ENCODE measurements at regions of chr10 and their contacts with region 1.

Region 1: GRCh38 chr10:987870-988666 is at the start of gene GTPBP4:
- DNase-seq: peak; percentile 98
- H3K4me3 ChIP-seq: peak within 1 kb of the TSS; percentile 99
- H3K27ac ChIP-seq: peak within 1 kb of the TSS; percentile 48
- H3K4me1 ChIP-seq: peaks cover 26% of the 10 kb centered on the region
- CTCF ChIP-seq: peak; percentile 77
- total RNA-seq, gene GTPBP4: 61.0 and 82.0 TPM in 2 replicates

Region 2: DNA sequence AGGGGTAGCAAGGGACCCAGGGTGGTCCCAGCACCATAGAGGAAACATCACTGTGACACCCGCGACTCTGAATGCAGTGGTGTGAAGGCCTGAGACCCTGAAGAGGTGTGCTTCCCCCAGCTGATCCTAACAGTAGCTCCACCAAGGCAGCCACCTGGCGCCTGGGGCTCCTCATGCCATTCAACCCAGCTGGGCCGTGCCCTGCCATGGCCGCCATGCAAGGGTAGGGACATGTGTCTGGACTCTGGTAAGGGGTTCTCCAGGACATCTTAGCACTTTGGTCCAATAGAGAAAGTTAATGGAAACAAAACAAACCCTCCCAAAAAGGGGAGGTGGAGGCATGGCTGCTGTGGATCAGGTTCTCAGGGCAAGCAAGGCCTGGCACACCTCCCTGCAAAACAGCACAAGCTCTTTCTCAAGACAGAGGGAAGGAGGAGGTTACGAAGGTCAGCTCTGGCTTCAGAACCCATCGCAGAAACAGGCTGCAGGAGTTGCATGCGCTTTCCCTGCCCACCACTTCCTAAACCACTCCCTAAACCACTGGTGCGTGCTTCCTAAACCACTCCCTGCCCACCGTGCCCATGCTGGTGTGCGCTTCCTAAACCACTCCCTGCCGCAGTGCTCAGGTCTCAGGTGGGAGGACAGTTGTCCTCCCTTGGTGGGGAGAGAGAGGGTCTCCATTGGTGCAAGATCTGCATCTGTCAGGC is 165.3 kb before region 1 on chr10:
- CTCF ChIA-PET with region 1: no interaction called
- POLR2A ChIA-PET with region 1: no interaction called
- intact Hi-C with region 1: loop called (anchors 10 kb)
- DNase-seq: peak; percentile 55
- H3K4me3 ChIP-seq: no peak overlapping the region
- H3K27ac ChIP-seq: peak overlapping the region; percentile 11
- H3K4me1 ChIP-seq: peaks cover 16% of the 10 kb centered on the region
- CTCF ChIP-seq: no peak

Region 3: DNA sequence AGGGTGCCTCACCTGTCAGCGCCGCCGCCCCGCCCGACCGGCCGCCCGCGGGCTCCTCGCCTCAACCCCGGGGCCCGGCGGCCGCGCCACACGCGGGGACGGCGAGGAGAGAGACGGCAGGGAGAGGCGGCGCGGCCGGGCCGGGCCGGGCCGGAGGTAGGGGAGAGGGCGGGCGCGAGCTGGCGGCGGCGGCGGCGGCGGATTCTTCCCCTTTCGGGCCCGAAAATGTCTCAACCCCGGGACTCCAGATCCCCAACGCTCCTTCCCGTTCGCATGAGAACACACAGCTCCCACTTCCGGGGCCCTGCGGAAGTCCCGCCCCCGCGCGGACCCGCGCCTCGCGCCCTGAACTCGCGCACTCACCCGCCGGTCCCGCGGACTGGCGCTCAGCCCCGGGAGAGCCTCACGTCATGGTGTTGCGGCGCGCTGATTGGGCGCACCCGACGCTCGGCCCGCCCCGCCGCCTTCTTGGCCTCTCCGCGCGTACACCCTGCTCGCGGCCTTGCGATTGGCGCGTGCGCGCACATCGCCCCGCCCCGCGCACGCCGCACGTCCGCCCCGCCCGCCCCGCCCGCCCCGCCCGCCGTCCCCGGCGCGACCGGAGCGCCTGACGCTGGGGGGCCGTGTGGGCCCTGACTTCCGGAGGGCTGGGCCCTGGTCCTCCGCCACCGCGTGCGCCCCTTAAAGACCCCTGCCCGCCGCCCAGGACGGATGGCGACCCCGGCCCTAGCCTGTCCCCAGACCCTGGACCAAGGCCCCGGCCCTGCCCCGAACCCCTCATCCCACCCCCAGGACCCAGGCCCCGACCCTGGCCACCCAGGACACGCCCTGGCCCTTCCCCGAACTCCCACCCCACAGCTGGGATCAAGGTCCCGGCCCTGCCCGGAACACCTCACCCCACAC is 56.4 kb before region 1 on chr10 and contains the start of gene LARP4B:
- CTCF ChIA-PET with region 1: no interaction called
- POLR2A ChIA-PET with region 1: interaction called, 4 read pairs
- intact Hi-C with region 1: loop called (anchors 1 kb)
- DNase-seq: peak; percentile 98
- H3K4me3 ChIP-seq: peak within 1 kb of the TSS; percentile 78
- H3K27ac ChIP-seq: peak within 1 kb of the TSS; percentile 75
- H3K4me1 ChIP-seq: peaks cover 47% of the 10 kb centered on the region
- CTCF ChIP-seq: no peak
- total RNA-seq, gene LARP4B: 64.8 and 68.3 TPM in 2 replicates

Region 4: DNA sequence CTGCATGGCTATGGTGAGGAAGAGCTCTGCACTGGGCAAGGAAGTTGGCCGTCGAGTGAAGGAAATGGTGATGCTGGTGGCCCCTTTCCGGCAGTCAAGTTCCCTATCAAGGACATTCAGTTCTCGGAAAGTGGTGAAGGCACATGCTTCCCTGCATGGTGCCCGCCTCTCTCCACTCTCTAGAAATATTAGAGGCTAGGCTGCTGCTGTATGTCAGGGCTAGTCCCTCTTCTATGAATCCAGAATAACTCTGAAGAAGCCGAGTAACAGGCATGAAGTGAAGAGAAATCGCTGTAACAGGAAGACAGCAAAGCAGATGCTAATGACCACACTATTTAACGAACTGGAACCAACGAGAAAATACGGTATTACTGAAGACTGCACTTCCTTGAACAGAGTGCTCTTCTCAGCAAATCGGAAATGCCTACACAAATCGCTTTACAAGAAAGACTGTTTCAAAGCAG is 55.5 kb after region 1 on chr10:
- CTCF ChIA-PET with region 1: no interaction called
- POLR2A ChIA-PET with region 1: no interaction called
- intact Hi-C with region 1: loop called (anchors 2 kb)
- DNase-seq: peak; percentile 80
- H3K4me3 ChIP-seq: peak overlapping the region; percentile 61
- H3K27ac ChIP-seq: peak overlapping the region; percentile 82
- H3K4me1 ChIP-seq: peaks cover 42% of the 10 kb centered on the region
- CTCF ChIP-seq: no peak

Region 5: GRCh38 chr10:1255118-1255517 is 267.1 kb after region 1 on chr10:
- CTCF ChIA-PET with region 1: no interaction called
- POLR2A ChIA-PET with region 1: no interaction called
- intact Hi-C with region 1: no loop called
- DNase-seq: no peak
- H3K4me3 ChIP-seq: no peak overlapping the region
- H3K27ac ChIP-seq: no peak overlapping the region
- H3K4me1 ChIP-seq: no peaks in the 10 kb centered on the region
- CTCF ChIP-seq: no peak

Measured in OCI-LY7 (cell line).